ENCODE measurements at regions of chr7 and their contacts with region 1.

Region 1: DNA sequence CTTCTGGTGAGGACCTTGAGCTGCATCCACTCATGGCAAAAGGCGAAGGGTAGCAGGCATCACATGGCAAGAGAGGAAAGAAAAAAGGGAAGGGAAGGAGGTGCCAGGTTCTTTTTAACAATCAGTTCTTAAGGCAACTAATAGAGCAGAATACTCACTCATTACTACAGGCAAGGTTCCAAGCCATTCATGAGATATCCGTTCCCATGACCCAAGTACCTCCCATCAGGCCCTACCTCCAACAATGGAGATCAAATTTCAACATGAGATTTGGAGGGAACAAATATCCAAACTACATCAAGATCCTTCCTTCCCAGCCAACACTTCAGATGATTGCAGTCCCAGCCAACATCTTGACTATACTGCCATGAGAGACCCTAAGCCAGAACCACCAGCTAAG is 38.9 kb upstream of the YAE1 start:
- DNase-seq: no peak
- ATAC-seq: no peak
- H3K4me3 ChIP-seq: no peak overlapping the region
- H3K4me3 Mint-ChIP-seq: no peak overlapping the region
- H3K27ac ChIP-seq: no peak overlapping the region
- H3K27ac Mint-ChIP-seq: no peak overlapping the region
- H3K4me1 ChIP-seq: no peaks in the 10 kb centered on the region
- H3K4me1 Mint-ChIP-seq: no peaks in the 10 kb centered on the region
- H3K27me3 ChIP-seq: no peaks in the 10 kb centered on the region
- H3K27me3 Mint-ChIP-seq: peaks cover 22% of the 10 kb centered on the region
- CTCF ChIP-seq: no peak

Region 2: GRCh38 chr7:38932509-38933168 is 594.7 kb before region 1 on chr7:
- CTCF ChIA-PET with region 1: no interaction called
- POLR2A ChIA-PET with region 1: no interaction called
- intact Hi-C with region 1: loop called in 1 of 2 experiments (anchors 10 kb)
- DNase-seq: peak in 9 of 14 experiments; percentile 2 to 52 (median 30)
- ATAC-seq: no peak
- H3K4me3 ChIP-seq: no peak overlapping the region
- H3K4me3 Mint-ChIP-seq: no peak overlapping the region
- H3K27ac ChIP-seq: no peak overlapping the region
- H3K27ac Mint-ChIP-seq: no peak overlapping the region
- H3K4me1 ChIP-seq: no peaks in the 10 kb centered on the region
- H3K4me1 Mint-ChIP-seq: no peaks in the 10 kb centered on the region
- H3K27me3 ChIP-seq: no peaks in the 10 kb centered on the region
- H3K27me3 Mint-ChIP-seq: no peaks in the 10 kb centered on the region
- CTCF ChIP-seq: peak; percentile 53

Region 3: GRCh38 chr7:39252916-39253315 is 274.4 kb before region 1 on chr7:
- CTCF ChIA-PET with region 1: no interaction called
- POLR2A ChIA-PET with region 1: no interaction called
- intact Hi-C with region 1: no loop called
- DNase-seq: no peak
- ATAC-seq: no peak
- H3K4me3 ChIP-seq: no peak overlapping the region
- H3K4me3 Mint-ChIP-seq: no peak overlapping the region
- H3K27ac ChIP-seq: no peak overlapping the region
- H3K27ac Mint-ChIP-seq: no peak overlapping the region
- H3K4me1 ChIP-seq: no peaks in the 10 kb centered on the region
- H3K4me1 Mint-ChIP-seq: no peaks in the 10 kb centered on the region
- H3K27me3 ChIP-seq: no peaks in the 10 kb centered on the region
- H3K27me3 Mint-ChIP-seq: no peaks in the 10 kb centered on the region
- CTCF ChIP-seq: no peak

Measured in CD4-positive, alpha-beta T cell (primary cell).